ENCODE measurements at regions of chr1 and their contacts with region 1.

Region 1: GRCh38 chr1:24201941-24202440 is 14.9 kb upstream of the IFNLR1 start:
- DNase-seq: peak; percentile 88 to 89
- H3K4me3 ChIP-seq: no peak overlapping the region
- H3K27ac ChIP-seq: peak overlapping the region in 2 of 3 donors; percentile 38 to 51
- H3K4me1 ChIP-seq: peaks cover 0 to 19% of the 10 kb centered on the region in 2 donors
- H3K27me3 ChIP-seq: no peaks in the 10 kb centered on the region
- CTCF ChIP-seq: peak; percentile 57 to 93 (median 84)
- POLR2A ChIP-seq: no peak

Region 2: GRCh38 chr1:23651069-23651808 is 550.8 kb before region 1 on chr1:
- intact Hi-C with region 1: no loop called
- DNase-seq: peak; percentile 88 to 89
- H3K4me3 ChIP-seq: no peak overlapping the region
- H3K27ac ChIP-seq: peak overlapping the region; percentile 90 to 98 (median 97)
- H3K4me1 ChIP-seq: peaks cover 23 to 27% of the 10 kb centered on the region in 2 donors
- H3K27me3 ChIP-seq: no peaks in the 10 kb centered on the region
- CTCF ChIP-seq: no peak
- POLR2A ChIP-seq: peak in 1 of 2 donors; percentile 71

Region 3: DNA sequence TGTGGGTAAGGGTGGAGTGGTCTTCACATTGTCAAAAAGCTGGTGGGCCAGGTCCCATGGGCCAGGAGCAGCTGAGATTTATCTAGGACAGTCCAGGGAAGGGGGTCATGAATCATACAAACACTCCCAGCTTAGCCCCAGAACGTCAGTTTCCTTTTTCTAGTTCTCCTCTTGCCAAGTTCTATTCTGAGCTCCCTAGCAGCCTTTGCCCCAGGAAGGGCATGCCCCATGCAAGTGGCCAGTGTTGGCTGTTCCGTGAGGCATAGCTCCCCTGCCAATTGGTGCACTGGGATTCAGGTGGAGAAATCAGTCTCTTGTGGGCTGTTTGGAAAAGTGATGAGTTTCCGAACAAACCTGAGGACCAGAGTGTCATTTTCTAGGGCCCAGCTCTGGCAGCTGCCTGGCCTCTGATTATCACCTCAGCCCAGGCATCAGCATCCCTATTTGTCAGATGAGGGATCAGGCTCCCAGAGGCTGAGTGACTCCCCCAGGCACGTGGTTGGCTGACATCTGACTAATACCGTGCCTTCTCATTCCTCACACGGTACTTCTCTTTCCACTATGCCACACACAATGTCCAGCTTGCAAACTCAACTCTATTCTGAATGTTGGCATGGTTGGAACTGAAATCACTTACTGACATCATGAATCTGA is 75.8 kb before region 1 on chr1:
- intact Hi-C with region 1: no loop called
- DNase-seq: no peak
- H3K4me3 ChIP-seq: no peak overlapping the region
- H3K27ac ChIP-seq: no peak overlapping the region
- H3K4me1 ChIP-seq: peaks cover under 1 to 8% of the 10 kb centered on the region in 2 donors
- H3K27me3 ChIP-seq: no peaks in the 10 kb centered on the region
- CTCF ChIP-seq: no peak
- POLR2A ChIP-seq: no peak

Region 4: GRCh38 chr1:24391882-24392603 is 190.1 kb after region 1 on chr1:
- intact Hi-C with region 1: loop called (anchors 2 kb)
- DNase-seq: peak; percentile 62 to 68
- H3K4me3 ChIP-seq: no peak overlapping the region
- H3K27ac ChIP-seq: peak overlapping the region; percentile 67 to 76 (median 73)
- H3K4me1 ChIP-seq: peaks cover 5 to 12% of the 10 kb centered on the region in 2 donors
- H3K27me3 ChIP-seq: no peaks in the 10 kb centered on the region
- CTCF ChIP-seq: peak; percentile 17 to 79 (median 77)
- POLR2A ChIP-seq: no peak

Measured in thyroid gland (tissue), 4 donors.